Right ventricle myocardium inferior (tissue), 1 donor: ENCODE measurements at regions of chr4 and their contacts with region 1.

Region 1: GRCh38 chr4:168717847-168718246 is 221.0 kb downstream of the PALLD start:
- DNase-seq: no peak
- ATAC-seq: peak; percentile 90

Region 2: GRCh38 chr4:168784786-168785461 is 67.1 kb after region 1 on chr4:
- intact Hi-C with region 1: loop called (anchors 5 kb)
- DNase-seq: no peak
- ATAC-seq: peak; percentile 41

Region 3: DNA sequence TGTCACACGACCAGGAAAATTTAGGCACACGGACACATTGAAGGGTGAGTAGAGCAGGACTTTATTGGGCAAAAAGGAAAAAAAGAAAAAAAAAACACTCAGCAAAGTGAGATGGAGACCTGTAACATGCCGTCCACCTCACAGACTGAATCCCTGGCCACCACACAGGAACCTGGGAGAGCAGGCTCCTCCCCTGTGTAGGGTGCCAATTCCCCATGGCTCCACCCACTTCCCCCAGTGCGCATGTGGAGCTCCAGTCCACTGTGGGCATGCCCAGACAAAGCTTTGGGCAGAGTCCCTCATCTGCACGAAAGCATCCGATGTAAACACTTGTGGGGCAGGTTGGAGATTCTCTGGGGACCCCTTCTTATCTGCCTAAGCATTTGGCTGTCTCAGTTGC is 315.8 kb after region 1 on chr4:
- intact Hi-C with region 1: no loop called
- DNase-seq: no peak
- ATAC-seq: no peak